ENCODE measurements at regions of chrX and their contacts with region 1.

Region 1: GRCh38 chrX:47658684-47659515 is at the start of gene UXT:
- DNase-seq: peak; percentile 96
- ATAC-seq: peak; percentile 83
- H3K4me3 Mint-ChIP-seq: peak within 1 kb of the TSS; percentile 86
- H3K27ac Mint-ChIP-seq: peak within 1 kb of the TSS; percentile 94
- H3K4me1 Mint-ChIP-seq: peaks cover 52% of the 10 kb centered on the region
- H3K27me3 Mint-ChIP-seq: no peaks in the 10 kb centered on the region
- total RNA-seq, gene UXT: 195 to 210 TPM

Region 2: DNA sequence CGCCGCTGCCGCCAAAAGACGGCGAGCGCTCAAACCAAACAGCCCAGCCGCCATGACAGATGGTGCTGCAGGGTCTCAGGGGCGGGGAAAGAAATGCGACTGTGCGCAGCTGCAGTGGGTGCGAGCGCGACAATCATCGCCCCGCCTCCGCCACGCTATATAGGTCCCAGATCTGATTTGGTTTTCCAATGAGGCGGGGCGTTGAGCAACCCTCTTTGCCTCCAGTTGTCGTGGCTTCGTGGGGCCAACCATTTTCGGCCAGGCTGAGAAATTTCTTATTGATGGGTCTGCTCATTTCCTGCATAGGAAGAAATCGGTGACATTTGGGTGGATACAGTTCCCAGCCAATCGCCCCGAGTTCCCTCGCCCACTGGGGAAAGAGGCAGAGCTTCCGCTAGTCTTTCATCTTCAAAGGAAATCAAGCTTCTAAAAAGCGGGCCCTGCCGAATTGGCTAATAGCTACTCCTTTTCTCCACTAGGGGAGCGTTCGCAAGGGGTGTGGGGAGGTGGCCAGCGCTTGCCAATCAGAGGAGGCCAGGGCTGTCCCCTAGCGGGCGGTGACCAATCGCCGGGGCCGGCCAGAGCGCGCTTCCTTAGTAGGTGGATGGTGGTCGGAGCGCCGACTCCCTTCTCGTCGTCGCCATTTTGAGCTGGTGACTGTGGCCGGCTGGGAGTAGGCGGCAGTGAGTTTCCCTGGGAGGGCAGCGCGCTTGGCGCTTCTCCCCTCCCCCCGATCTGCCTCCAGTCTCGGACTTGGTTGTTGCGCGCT is 514.1 kb before region 1 on chrX and contains the starts of genes NDUFB11 and RBM10:
- CTCF ChIA-PET with region 1: no interaction called
- POLR2A ChIA-PET with region 1: no interaction called
- intact Hi-C with region 1: loop called (anchors 1 to 10 kb)
- DNase-seq: peak; percentile 94
- ATAC-seq: peak; percentile 93
- H3K4me3 Mint-ChIP-seq: peak within 1 kb of the TSS; percentile 98
- H3K27ac Mint-ChIP-seq: peak within 1 kb of the TSS; percentile 100
- H3K4me1 Mint-ChIP-seq: peaks cover 24% of the 10 kb centered on the region
- H3K27me3 Mint-ChIP-seq: no peaks in the 10 kb centered on the region
- total RNA-seq, gene NDUFB11: 89.9 to 90.8 TPM
- total RNA-seq, gene RBM10: 63.8 to 72.1 TPM

Region 3: DNA sequence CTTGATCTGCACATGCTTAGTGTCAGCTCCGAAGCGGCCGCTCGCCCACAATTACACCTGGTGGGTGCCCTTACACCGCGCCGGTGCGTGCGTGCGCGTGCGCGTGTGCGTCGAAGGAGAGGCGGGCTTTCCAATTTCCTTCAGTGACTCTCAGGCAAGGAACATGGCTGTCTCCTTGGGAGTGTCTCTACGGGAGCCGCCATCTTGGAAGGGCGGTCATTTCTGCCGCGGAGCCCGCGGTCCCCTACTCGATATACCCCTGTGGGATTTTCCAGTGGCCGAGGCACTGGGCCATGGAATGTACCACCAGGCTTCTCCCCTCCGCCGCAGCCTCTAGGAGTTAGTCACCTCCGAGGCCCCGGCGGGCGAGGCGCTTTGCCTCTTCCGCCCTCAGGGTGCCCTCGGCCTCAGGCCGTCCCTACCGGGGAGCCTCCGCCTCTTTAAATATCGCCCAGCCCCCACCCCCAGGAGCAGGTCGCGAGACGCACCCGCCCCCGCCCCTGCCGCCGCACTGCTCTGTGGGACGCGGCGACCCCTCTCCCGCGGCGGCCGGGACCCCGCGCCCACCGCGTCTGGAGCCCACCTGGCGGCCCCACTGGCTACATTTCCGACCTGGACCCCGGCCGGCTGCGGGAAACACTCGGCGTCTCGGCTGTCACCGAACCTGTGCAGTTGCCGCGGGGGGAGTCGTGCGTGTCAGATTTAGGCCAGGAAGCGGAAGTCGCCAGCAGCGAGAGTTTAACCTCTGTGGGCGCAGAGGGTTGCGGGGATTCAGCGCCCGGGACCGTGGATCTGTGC is 176.2 kb before region 1 on chrX and contains the start of gene ZNF41:
- CTCF ChIA-PET with region 1: no interaction called
- POLR2A ChIA-PET with region 1: no interaction called
- intact Hi-C with region 1: loop called in 1 of 2 experiments (anchors 2 kb)
- DNase-seq: peak; percentile 86
- ATAC-seq: peak; percentile 90
- H3K4me3 Mint-ChIP-seq: peak within 1 kb of the TSS; percentile 97
- H3K27ac Mint-ChIP-seq: peak within 1 kb of the TSS; percentile 94
- H3K4me1 Mint-ChIP-seq: peaks cover 41% of the 10 kb centered on the region
- H3K27me3 Mint-ChIP-seq: no peaks in the 10 kb centered on the region
- total RNA-seq, gene ZNF41: 9.3 to 10.9 TPM

Region 4: GRCh38 chrX:47619486-47620302 is 39.2 kb before region 1 on chrX and contains the start of gene SYN1:
- CTCF ChIA-PET with region 1: no interaction called
- POLR2A ChIA-PET with region 1: interaction called, 8 read pairs
- intact Hi-C with region 1: loop called in 1 of 2 experiments (anchors 1 kb)
- DNase-seq: peak; percentile 89
- ATAC-seq: peak; percentile 78
- H3K4me3 Mint-ChIP-seq: peak within 1 kb of the TSS; percentile 45
- H3K27ac Mint-ChIP-seq: no peak within 1 kb of the TSS
- H3K4me1 Mint-ChIP-seq: peaks cover 13% of the 10 kb centered on the region
- H3K27me3 Mint-ChIP-seq: no peaks in the 10 kb centered on the region
- total RNA-seq, gene SYN1: 0.82 to 0.98 TPM

Region 5: DNA sequence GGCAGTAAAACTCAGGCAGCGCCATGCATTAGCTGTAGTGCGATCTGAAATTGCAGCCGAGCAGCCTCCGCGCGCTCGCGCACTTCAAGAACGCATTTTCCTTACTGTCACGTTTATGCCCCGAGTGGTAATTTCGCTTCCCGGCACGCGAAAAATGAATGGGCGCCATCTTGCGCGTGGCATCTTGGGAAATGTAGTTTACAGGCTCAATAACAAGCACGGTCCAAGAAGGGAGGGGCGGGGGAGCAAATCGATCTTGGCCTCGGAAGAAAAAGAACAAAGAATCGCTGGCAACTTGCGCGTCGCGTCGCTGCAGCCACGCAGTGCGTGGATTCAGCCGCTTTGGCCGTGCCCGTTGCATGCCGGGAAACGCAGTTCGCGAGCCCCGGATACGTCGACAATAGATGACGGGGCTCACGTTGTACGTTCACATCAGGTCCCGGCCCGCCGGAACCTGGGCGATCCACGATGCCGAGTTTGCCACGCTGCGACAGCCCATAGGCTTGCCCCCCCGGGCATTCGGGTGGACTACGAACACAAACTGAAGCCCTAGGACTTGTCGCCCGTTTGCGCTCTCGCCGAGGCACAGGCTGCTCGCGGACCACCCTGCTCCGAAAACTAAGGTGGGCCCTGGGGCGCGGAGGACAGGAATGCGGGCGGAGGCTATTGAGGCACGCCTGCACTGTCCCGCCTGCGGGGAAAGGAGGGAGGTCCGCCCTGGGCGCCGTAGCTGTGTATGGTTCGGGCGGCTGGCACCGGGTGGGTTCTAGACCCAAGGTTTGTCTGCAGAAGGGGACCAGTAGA is 817.1 kb after region 1 on chrX and contains the start of gene FTSJ1:
- CTCF ChIA-PET with region 1: no interaction called
- POLR2A ChIA-PET with region 1: no interaction called
- intact Hi-C with region 1: loop called in 1 of 2 experiments (anchors 2 kb)
- DNase-seq: peak; percentile 88
- ATAC-seq: peak; percentile 91
- H3K4me3 Mint-ChIP-seq: peak within 1 kb of the TSS; percentile 93
- H3K27ac Mint-ChIP-seq: peak within 1 kb of the TSS; percentile 90
- H3K4me1 Mint-ChIP-seq: peaks cover 36% of the 10 kb centered on the region
- H3K27me3 Mint-ChIP-seq: no peaks in the 10 kb centered on the region
- total RNA-seq, gene FTSJ1: 73.0 to 93.7 TPM

Measured in activated CD4-positive, alpha-beta T cell treated with anti-CD3 and anti-CD28 coated beads for 36 hours (primary cell).